Upper lobe of right lung (tissue), 1 donor: ENCODE measurements at regions of chr22 and their contacts with region 1.

Region 1: GRCh38 chr22:49979587-49980264 is 19.2 kb downstream of the PIM3 start:
- DNase-seq: peak; percentile 64
- ATAC-seq: peak; percentile 85
- H3K4me3 ChIP-seq: no peak overlapping the region
- H3K27ac ChIP-seq: no peak overlapping the region
- H3K4me1 ChIP-seq: peaks cover 9% of the 10 kb centered on the region
- H3K27me3 ChIP-seq: peaks cover 23% of the 10 kb centered on the region
- CTCF ChIP-seq: peak; percentile 75

Region 2: GRCh38 chr22:49936018-49936952 is 43.4 kb before region 1 on chr22:
- intact Hi-C with region 1: loop called (anchors 10 kb)
- DNase-seq: peak; percentile 98
- ATAC-seq: peak; percentile 81
- H3K4me3 ChIP-seq: peak overlapping the region; percentile 63
- H3K27ac ChIP-seq: peak overlapping the region; percentile 95
- H3K4me1 ChIP-seq: peaks cover 40% of the 10 kb centered on the region
- H3K27me3 ChIP-seq: no peaks in the 10 kb centered on the region
- CTCF ChIP-seq: no peak